ENCODE measurements at regions of chr3 and their contacts with region 1.

Region 1: GRCh38 chr3:171772427-171773056 is 37.7 kb downstream of the PLD1 start:
- DNase-seq: peak; percentile 63
- ATAC-seq: peak; percentile 43
- H3K4me3 Mint-ChIP-seq: no peak overlapping the region
- H3K27ac Mint-ChIP-seq: no peak overlapping the region
- H3K4me1 Mint-ChIP-seq: peaks cover 21% of the 10 kb centered on the region
- H3K27me3 Mint-ChIP-seq: no peaks in the 10 kb centered on the region
- CTCF ChIP-seq: peak; percentile 53; the same call in 1 of the 2 replicates

Region 2: DNA sequence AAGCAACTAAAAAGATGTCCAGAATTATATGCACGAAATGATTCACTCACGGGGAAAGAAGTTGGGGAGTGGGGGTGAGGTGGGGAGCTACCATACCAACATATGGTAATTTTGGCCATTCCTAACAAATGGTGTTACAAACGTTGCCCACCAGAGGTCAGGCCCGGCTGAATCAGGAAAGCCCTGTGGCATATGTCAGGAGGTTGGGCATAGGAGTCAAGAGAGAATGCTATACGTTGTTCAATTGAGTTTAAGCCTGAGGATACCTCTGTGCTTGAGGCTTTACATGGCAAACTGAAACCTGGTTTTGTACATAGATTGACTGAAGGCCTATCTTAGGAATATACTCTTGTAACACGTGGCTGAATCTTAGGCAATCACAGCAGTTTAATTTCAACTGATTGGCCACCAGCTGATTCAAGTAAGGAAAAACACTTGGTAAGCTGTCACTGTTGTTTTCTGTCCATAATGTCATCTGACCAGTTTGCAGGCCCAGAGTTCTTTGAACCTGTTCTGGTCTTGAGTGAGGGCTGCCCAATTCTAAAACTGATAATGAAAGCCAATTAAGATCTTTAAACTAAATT is 722.6 kb before region 1 on chr3:
- CTCF ChIA-PET with region 1: interaction called, 12 read pairs
- POLR2A ChIA-PET with region 1: no interaction called
- DNase-seq: peak; percentile 73
- ATAC-seq: peak; percentile 97
- H3K4me3 Mint-ChIP-seq: no peak overlapping the region
- H3K27ac Mint-ChIP-seq: no peak overlapping the region
- H3K4me1 Mint-ChIP-seq: peaks cover 6% of the 10 kb centered on the region
- H3K27me3 Mint-ChIP-seq: no peaks in the 10 kb centered on the region; the same call in 1 of the 2 replicates
- CTCF ChIP-seq: peak; percentile 45; the same call in 1 of the 2 replicates

Region 3: GRCh38 chr3:171640520-171641412 is 131.8 kb before region 1 on chr3:
- CTCF ChIA-PET with region 1: interaction called, 30 read pairs
- POLR2A ChIA-PET with region 1: interaction called, 9 read pairs
- DNase-seq: peak; percentile 23
- ATAC-seq: peak; percentile 98
- H3K4me3 Mint-ChIP-seq: no peak overlapping the region
- H3K27ac Mint-ChIP-seq: no peak overlapping the region
- H3K4me1 Mint-ChIP-seq: no peaks in the 10 kb centered on the region
- H3K27me3 Mint-ChIP-seq: no peaks in the 10 kb centered on the region
- CTCF ChIP-seq: no peak

Region 4: GRCh38 chr3:171703756-171704401 is 68.7 kb before region 1 on chr3:
- CTCF ChIA-PET with region 1: interaction called, 35 read pairs
- POLR2A ChIA-PET with region 1: no interaction called
- DNase-seq: peak; percentile 45
- ATAC-seq: peak; percentile 91
- H3K4me3 Mint-ChIP-seq: no peak overlapping the region
- H3K27ac Mint-ChIP-seq: no peak overlapping the region
- H3K4me1 Mint-ChIP-seq: peaks cover 13% of the 10 kb centered on the region
- H3K27me3 Mint-ChIP-seq: no peaks in the 10 kb centered on the region
- CTCF ChIP-seq: peak; percentile 60; the same call in 1 of the 2 replicates

Region 5: DNA sequence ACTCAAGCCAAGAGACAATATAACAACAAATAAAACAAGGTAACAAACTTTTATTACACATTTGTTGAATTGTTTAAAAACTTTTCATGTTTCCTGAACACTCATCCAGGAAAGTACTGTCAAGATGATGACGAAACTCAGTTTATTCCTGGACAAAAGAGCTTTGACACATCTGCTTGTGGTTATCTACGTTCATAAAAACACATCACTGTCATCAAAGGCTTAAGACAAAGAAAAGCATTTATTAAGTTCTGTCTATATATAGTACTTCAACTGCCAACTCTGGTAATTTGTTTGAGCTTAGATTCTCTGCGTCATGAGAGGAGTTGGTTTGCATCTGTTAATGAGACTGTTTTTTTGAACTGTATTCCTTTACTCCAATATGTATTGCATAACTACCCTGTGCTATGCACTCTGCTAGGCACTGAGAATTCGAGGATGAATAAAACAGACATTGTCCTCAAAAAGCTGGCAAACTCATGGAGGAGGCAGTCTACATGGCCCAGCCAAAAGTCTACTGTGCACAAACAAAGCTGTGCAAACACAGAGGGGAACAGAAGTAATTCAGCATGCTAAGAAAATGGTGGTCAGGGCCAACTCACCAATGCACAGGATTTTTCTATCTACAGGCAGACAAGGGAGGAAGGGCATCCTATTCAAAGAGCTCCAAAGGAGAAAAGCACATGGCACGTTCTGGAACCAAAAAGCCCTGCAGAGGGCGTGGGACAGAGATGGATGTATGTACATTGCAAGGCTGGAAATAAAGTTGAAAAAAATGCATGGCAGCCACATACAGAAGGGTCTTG is 16.2 kb after region 1 on chr3:
- CTCF ChIA-PET with region 1: interaction called, 28 read pairs
- POLR2A ChIA-PET with region 1: no interaction called
- DNase-seq: no peak
- ATAC-seq: no peak
- H3K4me3 Mint-ChIP-seq: no peak overlapping the region
- H3K27ac Mint-ChIP-seq: no peak overlapping the region
- H3K4me1 Mint-ChIP-seq: peaks cover 21% of the 10 kb centered on the region
- H3K27me3 Mint-ChIP-seq: peaks cover 3% of the 10 kb centered on the region; the same call in 1 of the 2 replicates
- CTCF ChIP-seq: no peak

Region 6: DNA sequence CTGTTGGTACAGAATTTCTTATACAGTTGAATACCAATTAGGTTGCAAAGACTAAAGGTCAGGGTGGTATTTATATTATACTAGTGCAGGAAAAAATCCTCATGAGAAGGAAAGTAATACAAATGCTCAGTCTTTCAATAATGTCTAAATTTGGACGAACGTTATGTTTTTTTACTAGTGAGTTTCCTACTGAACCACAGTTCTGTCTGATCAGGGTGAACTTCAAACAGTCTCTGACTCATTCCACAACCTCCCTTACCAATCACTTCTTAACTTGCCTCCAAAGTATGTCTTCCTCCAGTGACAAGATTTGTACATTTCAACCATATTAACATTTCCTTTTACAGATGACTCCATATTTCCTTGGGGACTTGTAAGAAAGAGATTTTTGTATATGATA is 74.1 kb after region 1 on chr3:
- CTCF ChIA-PET with region 1: no interaction called
- POLR2A ChIA-PET with region 1: no interaction called
- DNase-seq: no peak
- ATAC-seq: no peak
- H3K4me3 Mint-ChIP-seq: no peak overlapping the region
- H3K27ac Mint-ChIP-seq: no peak overlapping the region
- H3K4me1 Mint-ChIP-seq: peaks cover 11% of the 10 kb centered on the region
- H3K27me3 Mint-ChIP-seq: no peaks in the 10 kb centered on the region
- CTCF ChIP-seq: no peak

Region 7: DNA sequence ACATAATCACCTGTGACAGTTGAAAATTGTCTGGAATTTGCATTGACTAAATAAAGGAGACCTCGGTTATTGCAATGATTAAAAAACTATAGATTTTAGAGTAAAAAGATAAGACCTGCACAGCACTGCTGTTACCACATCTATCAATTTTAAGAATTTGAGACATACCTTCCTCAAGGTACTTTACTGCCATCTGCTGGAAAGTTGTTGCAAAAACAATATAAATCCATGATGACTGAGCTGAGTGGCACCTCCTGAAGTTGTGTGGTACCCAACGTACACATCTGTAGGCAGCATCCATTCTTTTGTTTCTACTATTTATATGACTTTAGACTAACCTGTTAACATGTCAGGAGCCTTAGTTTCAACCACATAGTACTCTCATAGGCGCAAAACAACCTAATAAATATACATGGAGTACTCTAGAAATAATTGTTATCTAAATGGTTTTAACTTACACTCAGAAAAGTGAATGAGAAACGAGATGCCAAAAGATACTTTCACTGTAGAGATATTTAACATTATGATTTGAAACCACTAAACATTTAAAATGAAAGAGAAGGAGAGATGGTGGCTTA is 569.0 kb after region 1 on chr3:
- CTCF ChIA-PET with region 1: interaction called, 11 read pairs
- POLR2A ChIA-PET with region 1: no interaction called
- DNase-seq: no peak
- ATAC-seq: peak; percentile 70
- H3K4me3 Mint-ChIP-seq: no peak overlapping the region
- H3K27ac Mint-ChIP-seq: no peak overlapping the region
- H3K4me1 Mint-ChIP-seq: no peaks in the 10 kb centered on the region
- H3K27me3 Mint-ChIP-seq: no peaks in the 10 kb centered on the region
- CTCF ChIP-seq: peak; percentile 26; the same call in 1 of the 2 replicates